Psoas muscle (tissue), 8 donors: ENCODE measurements at regions of chr6 and their contacts with region 1.

Region 1: DNA sequence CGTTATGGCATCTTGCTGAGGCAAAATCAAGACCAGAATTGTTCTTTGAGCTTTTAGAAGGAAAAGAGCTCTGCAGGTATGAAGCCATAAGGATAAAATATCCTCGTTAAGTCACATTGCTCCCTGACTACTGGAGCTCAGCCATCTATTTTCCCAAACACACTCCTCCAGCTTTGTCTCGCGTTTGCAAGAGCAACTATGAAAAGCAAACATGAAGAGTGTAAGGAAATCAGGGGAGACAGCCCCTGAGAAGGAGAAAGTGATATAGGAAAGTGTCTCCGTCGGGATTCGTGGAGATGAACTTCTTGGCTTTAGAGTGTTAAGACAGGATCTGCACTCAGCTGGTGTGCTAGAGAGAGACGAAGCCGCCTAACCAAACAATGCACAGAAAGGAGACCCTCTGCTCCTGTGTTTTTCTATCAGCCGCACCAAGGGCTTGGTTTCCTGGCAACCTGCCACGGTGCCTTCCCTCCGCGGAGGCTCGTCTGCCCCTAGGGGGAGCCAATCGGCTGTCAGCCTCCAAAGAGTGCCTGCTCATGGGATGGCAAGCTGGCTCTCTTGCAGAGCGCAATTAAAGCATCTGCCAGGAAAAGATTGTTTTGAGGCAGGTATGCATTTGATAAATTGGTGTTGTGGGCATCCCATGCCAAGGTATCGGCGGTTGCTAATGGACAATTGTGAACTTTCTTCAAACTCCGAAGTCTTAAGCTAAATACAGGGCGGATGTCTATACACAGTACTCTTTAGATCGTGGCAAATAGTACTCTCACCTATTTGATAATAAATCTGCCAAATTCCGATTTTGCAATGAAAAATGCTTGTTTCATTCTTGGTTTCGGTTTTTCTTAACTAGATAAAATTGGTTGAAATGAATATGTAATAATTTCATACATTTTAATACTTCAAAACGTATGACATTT is 603.2 kb downstream of the RNF144B start:
- DNase-seq: peak; percentile 49 to 75
- ATAC-seq: peak in 3 of 4 donors; percentile 62 to 74 (median 68)
- H3K4me3 ChIP-seq: no peak overlapping the region
- H3K27ac ChIP-seq: no peak overlapping the region
- H3K4me1 ChIP-seq: no peaks in the 10 kb centered on the region
- H3K27me3 ChIP-seq: no peaks in the 10 kb centered on the region
- CTCF ChIP-seq: peak; percentile 39

Region 2: DNA sequence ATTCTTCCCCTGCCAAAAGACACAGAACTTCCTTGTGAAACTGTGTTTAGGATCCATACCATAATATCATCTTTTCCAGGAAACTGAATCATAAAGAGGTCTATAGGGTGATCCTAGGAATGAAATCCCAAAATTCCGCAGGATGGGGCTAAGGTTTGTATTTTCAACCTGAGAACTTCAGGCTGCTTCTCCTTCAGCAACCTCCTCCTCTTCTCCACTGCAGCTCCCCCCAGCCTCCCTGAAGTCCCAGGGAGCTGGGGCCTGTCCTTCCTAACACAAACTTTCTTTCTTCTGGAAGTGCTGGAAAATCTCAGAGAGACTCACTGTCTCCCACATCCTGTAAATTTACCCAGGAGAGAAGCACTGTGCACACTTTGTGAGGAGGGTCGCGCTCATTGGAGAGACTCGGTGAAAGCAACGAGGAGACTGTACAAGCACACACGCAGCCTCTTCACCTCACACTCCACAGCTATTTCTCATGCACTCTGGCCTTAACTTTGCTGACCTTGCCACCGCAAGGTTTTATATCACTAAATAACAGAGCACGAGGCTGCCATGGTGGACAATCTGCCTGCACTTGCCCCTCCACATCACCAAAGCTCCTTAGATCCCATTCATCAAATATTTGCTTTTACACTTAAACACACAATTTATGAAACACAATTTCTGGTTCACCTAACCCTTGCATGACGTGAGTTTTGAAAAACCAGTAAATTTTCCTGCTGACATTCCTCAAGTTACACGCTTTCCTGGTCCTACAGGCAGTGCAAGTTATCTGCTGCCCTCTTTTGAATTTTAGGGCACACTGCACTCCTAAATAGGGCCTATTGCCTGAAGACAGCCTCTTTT is 861.1 kb after region 1 on chr6:
- intact Hi-C with region 1: loop called in 1 of 2 experiments (anchors 10 kb)
- DNase-seq: no peak
- ATAC-seq: peak; percentile 73 to 84 (median 79)
- H3K4me3 ChIP-seq: no peak overlapping the region
- H3K27ac ChIP-seq: no peak overlapping the region
- H3K4me1 ChIP-seq: no peaks in the 10 kb centered on the region
- H3K27me3 ChIP-seq: no peaks in the 10 kb centered on the region
- CTCF ChIP-seq: peak; percentile 88

Region 3: GRCh38 chr6:20056350-20056992 is 1066.2 kb after region 1 on chr6:
- intact Hi-C with region 1: loop called in 1 of 2 experiments (anchors 10 kb)
- DNase-seq: no peak
- ATAC-seq: no peak
- H3K4me3 ChIP-seq: no peak overlapping the region
- H3K27ac ChIP-seq: no peak overlapping the region
- H3K4me1 ChIP-seq: no peaks in the 10 kb centered on the region
- H3K27me3 ChIP-seq: no peaks in the 10 kb centered on the region
- CTCF ChIP-seq: peak; percentile 37